ENCODE measurements at regions of chr20 and their contacts with region 1.

Region 1: DNA sequence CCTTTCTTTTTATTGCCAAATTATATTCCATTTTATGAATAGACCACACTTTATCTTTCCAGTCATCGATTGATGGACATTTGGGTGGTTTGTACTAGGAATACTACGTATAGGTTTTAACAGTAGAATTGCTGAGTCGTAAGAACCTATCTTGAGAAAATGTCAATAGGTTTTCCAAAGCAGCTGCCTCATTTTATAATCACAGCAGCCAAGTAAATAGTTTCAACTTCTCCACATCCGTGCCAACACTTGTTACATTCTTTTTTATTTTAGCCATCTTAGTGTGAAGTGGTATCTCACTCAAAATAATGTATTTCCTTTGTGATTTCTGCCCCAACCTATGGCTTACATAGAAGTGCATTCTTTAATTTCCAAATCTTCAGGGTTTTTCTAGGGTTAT is 479.2 kb downstream of the CDH26 start:
- DNase-seq: no peak
- H3K4me3 ChIP-seq: no peak overlapping the region
- H3K27ac ChIP-seq: no peak overlapping the region
- H3K4me1 ChIP-seq: no peaks in the 10 kb centered on the region
- H3K27me3 ChIP-seq: no peaks in the 10 kb centered on the region
- CTCF ChIP-seq: no peak
- POLR2A ChIP-seq: no peak

Region 2: DNA sequence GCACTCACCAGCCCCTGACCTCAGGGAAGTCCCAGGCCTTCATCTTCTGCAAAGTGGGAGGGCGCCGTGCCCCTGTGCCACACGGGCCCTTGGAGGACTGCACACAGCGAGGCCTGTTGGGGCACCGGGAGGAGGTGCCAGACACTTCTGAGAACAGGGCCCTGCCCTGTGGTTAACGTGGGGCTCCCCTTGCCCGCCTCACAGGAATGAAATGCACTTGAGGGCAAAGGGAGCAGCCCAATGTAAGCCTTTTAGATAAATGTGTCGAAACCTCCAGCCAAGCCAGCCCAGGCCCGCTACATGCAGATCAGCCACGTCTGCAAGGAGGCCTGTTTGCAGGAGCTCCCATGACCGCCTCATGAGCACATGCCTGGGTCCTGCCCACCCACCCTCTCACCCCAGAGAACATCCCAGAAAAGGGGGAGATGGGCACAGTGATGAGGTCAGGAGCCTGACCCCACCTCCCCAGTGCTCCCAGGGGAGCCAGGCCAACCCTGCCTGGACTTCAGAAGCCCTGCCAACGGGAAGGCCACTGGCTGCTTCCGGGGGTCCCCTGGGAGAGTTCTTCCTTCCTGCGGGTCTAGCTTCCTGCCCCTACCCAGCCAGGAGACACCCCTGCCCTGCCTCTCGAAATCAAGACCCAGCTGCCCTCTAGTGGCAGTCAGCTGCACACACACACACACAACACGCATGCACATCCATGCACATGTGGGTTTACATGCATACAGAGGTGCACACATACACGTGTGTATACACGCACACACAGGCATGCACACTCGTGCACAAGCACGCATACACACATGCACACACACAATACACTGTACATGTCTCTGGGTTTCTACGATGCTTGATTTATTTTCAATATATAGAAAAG is 1449.5 kb after region 1 on chr20:
- intact Hi-C with region 1: loop called (anchors 5 kb)
- DNase-seq: no peak
- H3K4me3 ChIP-seq: no peak overlapping the region
- H3K27ac ChIP-seq: no peak overlapping the region
- H3K4me1 ChIP-seq: no peaks in the 10 kb centered on the region
- H3K27me3 ChIP-seq: peaks cover 0 to 46% of the 10 kb centered on the region in 2 donors
- CTCF ChIP-seq: peak in 2 of 3 donors; percentile 12 to 45
- POLR2A ChIP-seq: no peak

Measured in breast epithelium (tissue), 4 donors.